Sciatic nerve (tissue), 2 donors: ENCODE measurements at regions of chr9 and their contacts with region 1.

Region 1: GRCh38 chr9:99040911-99041582 is 63.9 kb upstream of the TGFBR1 start:
- DNase-seq: no peak
- ATAC-seq: peak; percentile 53

Region 2: GRCh38 chr9:99012942-99013512 is 28.0 kb before region 1 on chr9:
- intact Hi-C with region 1: no loop called
- DNase-seq: no peak
- ATAC-seq: peak; percentile 52

Region 3: DNA sequence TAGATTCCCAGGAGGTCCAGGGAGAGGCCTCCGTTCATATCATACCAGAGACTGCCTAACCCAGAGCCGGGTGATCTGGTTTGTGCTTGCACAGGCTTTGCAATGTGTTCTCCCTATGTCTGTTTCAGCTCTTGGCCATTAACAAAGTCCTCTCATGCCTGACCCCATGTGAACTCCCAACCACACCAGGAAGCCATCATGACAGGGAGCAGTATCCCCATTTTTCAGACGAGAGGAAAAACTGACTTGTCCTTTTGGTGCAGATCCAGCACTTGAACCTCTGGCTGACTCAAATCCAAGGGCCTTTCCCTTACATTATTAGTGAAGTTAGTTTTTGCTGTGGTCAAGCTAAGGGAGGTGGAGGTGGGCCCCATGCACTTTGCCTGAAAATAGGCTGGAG is 1253.3 kb after region 1 on chr9:
- intact Hi-C with region 1: loop called (anchors 10 kb)
- DNase-seq: no peak
- ATAC-seq: no peak